ENCODE measurements at regions of chr17 and their contacts with region 1.

Region 1: DNA sequence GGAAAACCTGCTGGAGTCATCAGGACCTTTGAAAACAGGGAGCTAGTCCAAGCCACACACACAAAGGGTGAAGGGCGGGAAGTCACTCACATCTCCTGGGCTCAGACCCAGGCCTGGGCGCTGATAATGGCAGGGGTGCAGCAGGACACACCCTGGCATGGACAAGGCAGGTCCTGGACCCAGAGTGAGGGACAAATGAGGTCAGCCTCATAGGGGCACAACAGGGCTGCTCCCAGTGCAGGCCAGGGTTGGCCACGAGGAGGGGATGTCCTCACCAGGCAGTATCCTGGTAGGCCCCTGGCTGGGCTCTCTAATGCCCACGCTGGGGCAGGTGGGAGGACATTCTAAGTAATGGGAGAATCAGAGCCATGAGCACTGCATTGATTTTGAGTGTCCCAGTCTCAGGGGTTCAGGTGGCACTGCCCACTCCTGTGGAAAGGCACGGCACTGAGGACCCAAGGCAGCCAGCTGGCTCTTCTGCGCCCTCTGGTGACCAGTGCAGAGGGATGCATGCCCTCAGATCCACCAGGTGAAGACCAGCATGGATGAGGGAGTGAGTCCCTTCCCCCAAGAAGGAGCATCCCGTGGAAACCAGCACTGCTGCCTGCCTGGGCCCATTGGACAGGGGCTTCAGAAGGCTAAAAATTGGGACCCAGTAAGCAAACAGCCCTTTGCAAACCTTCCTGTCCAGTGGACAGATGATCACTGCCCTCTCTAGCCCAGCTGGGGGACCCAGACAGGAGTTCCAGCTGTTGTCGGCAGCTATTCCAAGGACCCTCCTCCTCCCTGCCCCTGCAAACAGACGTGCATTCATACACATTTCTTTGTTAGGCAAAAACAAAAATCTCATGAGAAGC is 23.4 kb upstream of the SREBF1 start:
- DNase-seq: peak in 1 of 2 donors; percentile 89
- ATAC-seq: peak; percentile 90
- H3K4me3 ChIP-seq: no peak overlapping the region
- H3K27ac ChIP-seq: no peak overlapping the region
- H3K4me1 ChIP-seq: no peaks in the 10 kb centered on the region
- H3K27me3 ChIP-seq: no peaks in the 10 kb centered on the region

Region 2: DNA sequence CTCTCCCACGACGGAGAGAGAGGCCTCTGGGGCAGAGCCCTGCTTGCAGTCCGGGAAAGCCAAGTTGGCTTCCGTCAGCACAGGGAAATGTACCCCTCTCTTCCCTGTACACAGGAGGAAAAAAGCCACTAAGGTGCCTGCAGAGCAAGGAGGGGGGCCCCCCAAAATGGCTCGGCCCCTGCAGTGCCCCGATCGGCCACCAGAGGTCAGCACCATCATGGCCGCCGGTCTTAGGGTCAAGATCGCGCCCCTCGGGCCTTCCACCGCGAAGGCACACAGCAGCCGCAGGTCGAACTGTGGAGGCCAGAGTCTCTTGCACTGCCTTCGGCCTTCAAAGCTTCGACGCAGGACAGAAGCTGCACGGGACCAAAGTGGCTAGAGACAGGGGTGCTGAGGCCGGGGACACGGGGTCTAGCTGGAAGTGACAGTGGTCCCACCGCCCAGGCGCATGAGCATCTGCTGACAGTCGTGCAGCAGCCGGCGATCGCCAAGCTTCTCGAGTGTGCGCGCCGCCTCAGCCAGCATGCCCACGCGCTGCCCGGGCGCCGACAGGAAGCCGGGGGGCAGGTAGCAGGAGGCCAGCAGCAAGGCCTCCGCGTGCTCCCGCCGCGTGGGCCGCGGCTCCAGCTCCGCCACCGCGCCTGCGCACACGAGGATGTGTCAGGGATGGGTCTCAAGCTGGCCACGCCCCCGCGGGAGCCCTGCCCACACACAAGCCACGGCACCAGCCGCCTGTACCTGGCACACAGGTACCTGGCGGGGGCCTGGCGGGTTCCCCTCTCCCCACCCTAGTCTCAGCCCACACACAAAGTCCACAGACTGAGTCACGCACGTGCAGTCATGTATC is 47.7 kb before region 1 on chr17:
- intact Hi-C with region 1: loop called (anchors 1 to 2 kb)
- DNase-seq: peak; percentile 80 to 93
- ATAC-seq: peak; percentile 76
- H3K4me3 ChIP-seq: no peak overlapping the region
- H3K27ac ChIP-seq: no peak overlapping the region
- H3K4me1 ChIP-seq: no peaks in the 10 kb centered on the region
- H3K27me3 ChIP-seq: no peaks in the 10 kb centered on the region

Measured in aorta (tissue), 5 donors.